ENCODE measurements at regions of chr9 and their contacts with region 1.

Region 1: GRCh38 chr9:37592108-37592951 is at the start of gene TOMM5:
- DNase-seq: peak; percentile 93
- ATAC-seq: peak; percentile 96
- H3K4me3 ChIP-seq: peak within 1 kb of the TSS; percentile 87 to 100 (median 97)
- H3K4me3 Mint-ChIP-seq: peak within 1 kb of the TSS; percentile 99
- H3K27ac ChIP-seq: peak within 1 kb of the TSS; percentile 71 to 83
- H3K27ac Mint-ChIP-seq: peak within 1 kb of the TSS; percentile 96
- H3K4me1 ChIP-seq: peaks cover 23 to 36% of the 10 kb centered on the region in 2 donors
- H3K4me1 Mint-ChIP-seq: peaks cover 46% of the 10 kb centered on the region
- H3K27me3 ChIP-seq: peaks cover 0 to 5% (median 0%) of the 10 kb centered on the region in 4 experiments
- H3K27me3 Mint-ChIP-seq: peaks cover 4% of the 10 kb centered on the region
- CTCF ChIP-seq: no peak
- total RNA-seq, gene TOMM5: 39.7 and 44.4 TPM in 2 replicates

Region 2: GRCh38 chr9:36572515-36573418 is 1019.6 kb before region 1 on chr9 and contains the start of gene MELK:
- CTCF ChIA-PET with region 1: no interaction called
- POLR2A ChIA-PET with region 1: no interaction called
- intact Hi-C with region 1: loop called (anchors 10 kb)
- DNase-seq: peak; percentile 86
- ATAC-seq: peak; percentile 90
- H3K4me3 ChIP-seq: peak within 1 kb of the TSS; percentile 67 to 97 (median 81)
- H3K4me3 Mint-ChIP-seq: peak within 1 kb of the TSS; percentile 90
- H3K27ac ChIP-seq: peak within 1 kb of the TSS; percentile 18 to 67
- H3K27ac Mint-ChIP-seq: peak within 1 kb of the TSS; percentile 71
- H3K4me1 ChIP-seq: peaks cover 8 to 16% of the 10 kb centered on the region in 2 donors
- H3K4me1 Mint-ChIP-seq: peaks cover 13% of the 10 kb centered on the region
- H3K27me3 ChIP-seq: peaks cover 0 to 2% (median 0%) of the 10 kb centered on the region in 4 experiments
- H3K27me3 Mint-ChIP-seq: peaks cover 4% of the 10 kb centered on the region
- CTCF ChIP-seq: no peak
- total RNA-seq, gene MELK: 0.17 TPM in 1 of 2 replicates, not detected in the other

Region 3: DNA sequence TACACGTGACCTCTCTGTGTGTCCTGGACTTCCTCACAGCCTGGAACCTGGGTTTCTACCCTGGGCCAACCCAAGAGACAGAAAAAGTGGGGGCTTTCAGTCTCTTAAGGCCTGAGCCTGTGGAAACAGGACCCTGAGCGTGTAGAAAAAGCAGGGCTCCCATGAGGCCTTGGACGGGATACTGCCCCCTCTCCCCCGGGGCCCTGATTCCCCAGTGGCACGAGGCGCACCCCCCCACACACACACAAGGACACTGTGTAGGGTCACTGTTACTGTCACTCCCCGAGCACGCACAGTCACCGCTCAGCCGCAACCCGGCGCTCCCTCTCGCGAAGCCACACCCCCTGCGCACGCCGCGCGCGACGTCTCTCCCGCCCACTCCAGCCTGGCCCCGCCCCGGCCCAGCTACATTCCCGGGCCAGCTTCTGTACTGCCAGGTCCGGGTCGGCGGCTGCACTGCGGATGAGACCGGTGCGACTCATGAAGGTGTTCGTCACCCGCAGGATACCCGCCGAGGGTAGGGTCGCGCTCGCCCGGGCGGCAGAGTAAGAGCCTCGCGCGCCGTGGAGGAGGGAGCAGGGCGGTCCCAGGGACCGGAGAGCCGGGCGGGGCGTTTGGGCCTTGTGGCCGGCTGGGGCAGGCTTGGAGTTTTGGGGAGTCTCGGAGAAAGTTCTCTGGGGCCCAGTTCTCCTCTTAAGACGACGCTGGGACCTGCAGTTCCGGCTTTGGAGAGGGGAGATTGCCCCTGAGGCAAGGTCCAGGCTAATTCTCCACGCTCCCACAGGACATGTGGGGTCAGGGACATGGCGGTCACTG is 169.8 kb before region 1 on chr9 and contains the start of gene GRHPR:
- CTCF ChIA-PET with region 1: interaction called, 4 read pairs
- POLR2A ChIA-PET with region 1: no interaction called
- intact Hi-C with region 1: loop called (anchors 5 kb)
- DNase-seq: peak; percentile 90
- ATAC-seq: peak; percentile 99
- H3K4me3 ChIP-seq: peak within 1 kb of the TSS; percentile 80 to 88 (median 82)
- H3K4me3 Mint-ChIP-seq: peak within 1 kb of the TSS; percentile 97
- H3K27ac ChIP-seq: peak within 1 kb of the TSS; percentile 68 to 80
- H3K27ac Mint-ChIP-seq: peak within 1 kb of the TSS; percentile 92
- H3K4me1 ChIP-seq: peaks cover 18 to 31% of the 10 kb centered on the region in 2 donors
- H3K4me1 Mint-ChIP-seq: peaks cover 28% of the 10 kb centered on the region
- H3K27me3 ChIP-seq: no peaks in the 10 kb centered on the region
- H3K27me3 Mint-ChIP-seq: no peaks in the 10 kb centered on the region
- CTCF ChIP-seq: no peak
- total RNA-seq, gene GRHPR: 121 and 122 TPM in 2 replicates

Region 4: DNA sequence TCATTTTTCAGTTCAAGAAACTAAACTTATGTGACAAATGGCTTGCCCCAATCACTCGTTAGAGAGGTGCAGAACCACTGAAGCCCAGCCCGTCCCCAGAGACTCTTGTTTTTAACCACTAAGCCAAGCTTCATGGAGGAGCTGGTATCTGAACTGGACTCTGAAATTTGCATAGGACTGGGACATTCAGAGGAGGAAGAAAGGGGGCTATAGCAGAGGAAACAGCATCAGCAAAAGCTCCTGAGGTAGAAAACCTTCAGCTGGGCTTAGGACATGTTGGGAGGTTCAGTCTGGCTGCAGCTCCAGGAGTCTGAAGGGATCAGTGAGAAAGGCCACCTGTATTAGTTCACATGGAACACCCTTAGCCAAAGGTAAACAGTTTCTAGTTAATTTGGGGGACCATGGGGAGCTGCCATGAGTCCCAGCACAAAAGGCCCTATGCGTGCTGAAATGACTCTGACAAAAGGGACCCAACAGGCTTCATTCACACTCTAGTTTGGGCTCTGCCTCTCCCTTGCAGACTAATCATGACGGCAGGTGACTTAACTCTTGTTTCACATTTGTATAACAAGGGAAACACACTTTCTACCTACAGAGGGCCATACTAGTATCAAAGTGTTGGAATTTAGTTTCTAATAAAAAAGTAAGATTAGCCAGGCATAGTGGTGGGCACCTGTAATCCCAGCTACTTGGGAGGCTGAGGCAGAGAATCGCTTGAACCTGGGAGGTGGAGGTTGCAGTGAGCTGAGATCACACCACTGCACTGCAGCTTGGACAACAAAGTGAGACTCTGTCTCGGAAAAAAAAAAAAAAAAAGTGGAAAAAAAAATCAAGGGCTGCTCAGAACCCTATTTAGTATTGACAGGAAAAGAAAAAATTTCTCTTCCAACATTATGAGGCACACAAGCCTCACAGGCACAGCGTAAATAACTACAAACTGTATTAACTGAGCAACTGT is 26.4 kb before region 1 on chr9:
- CTCF ChIA-PET with region 1: interaction called, 7 read pairs
- POLR2A ChIA-PET with region 1: interaction called, 8 read pairs
- intact Hi-C with region 1: loop called (anchors 1 kb)
- DNase-seq: peak; percentile 73
- ATAC-seq: peak; percentile 94
- H3K4me3 ChIP-seq: peak overlapping the region in 3 of 5 experiments; percentile 9 to 52 (median 33)
- H3K4me3 Mint-ChIP-seq: peak overlapping the region; percentile 83
- H3K27ac ChIP-seq: peak overlapping the region; percentile 70
- H3K27ac Mint-ChIP-seq: peak overlapping the region; percentile 94
- H3K4me1 ChIP-seq: peaks cover 59 to 76% of the 10 kb centered on the region in 2 donors
- H3K4me1 Mint-ChIP-seq: peaks cover 78% of the 10 kb centered on the region
- H3K27me3 ChIP-seq: no peaks in the 10 kb centered on the region
- H3K27me3 Mint-ChIP-seq: no peaks in the 10 kb centered on the region
- CTCF ChIP-seq: no peak

Region 5: GRCh38 chr9:37575921-37576721 is 16.2 kb before region 1 on chr9 and contains the start of gene FBXO10:
- CTCF ChIA-PET with region 1: interaction called, 101 read pairs
- POLR2A ChIA-PET with region 1: interaction called, 17 read pairs
- intact Hi-C with region 1: loop called (anchors 1 kb)
- DNase-seq: peak; percentile 75
- ATAC-seq: peak; percentile 73
- H3K4me3 ChIP-seq: peak within 1 kb of the TSS; percentile 64 to 95 (median 92)
- H3K4me3 Mint-ChIP-seq: peak within 1 kb of the TSS; percentile 98
- H3K27ac ChIP-seq: peak within 1 kb of the TSS; percentile 81 to 86
- H3K27ac Mint-ChIP-seq: peak within 1 kb of the TSS; percentile 96
- H3K4me1 ChIP-seq: peaks cover 17 to 27% of the 10 kb centered on the region in 2 donors
- H3K4me1 Mint-ChIP-seq: peaks cover 56% of the 10 kb centered on the region
- H3K27me3 ChIP-seq: no peaks in the 10 kb centered on the region
- H3K27me3 Mint-ChIP-seq: no peaks in the 10 kb centered on the region
- CTCF ChIP-seq: no peak
- total RNA-seq, gene FBXO10: 67.3 and 68.0 TPM in 2 replicates

Region 6: GRCh38 chr9:37640246-37640645 is 47.9 kb after region 1 on chr9:
- CTCF ChIA-PET with region 1: no interaction called
- POLR2A ChIA-PET with region 1: no interaction called
- intact Hi-C with region 1: no loop called
- DNase-seq: no peak
- ATAC-seq: no peak
- H3K4me3 ChIP-seq: no peak overlapping the region
- H3K4me3 Mint-ChIP-seq: no peak overlapping the region
- H3K27ac ChIP-seq: no peak overlapping the region
- H3K27ac Mint-ChIP-seq: no peak overlapping the region
- H3K4me1 ChIP-seq: no peaks in the 10 kb centered on the region
- H3K4me1 Mint-ChIP-seq: no peaks in the 10 kb centered on the region
- H3K27me3 ChIP-seq: peaks cover 0 to 10% (median 0%) of the 10 kb centered on the region in 4 experiments
- H3K27me3 Mint-ChIP-seq: peaks cover 15% of the 10 kb centered on the region
- CTCF ChIP-seq: no peak

Region 7: DNA sequence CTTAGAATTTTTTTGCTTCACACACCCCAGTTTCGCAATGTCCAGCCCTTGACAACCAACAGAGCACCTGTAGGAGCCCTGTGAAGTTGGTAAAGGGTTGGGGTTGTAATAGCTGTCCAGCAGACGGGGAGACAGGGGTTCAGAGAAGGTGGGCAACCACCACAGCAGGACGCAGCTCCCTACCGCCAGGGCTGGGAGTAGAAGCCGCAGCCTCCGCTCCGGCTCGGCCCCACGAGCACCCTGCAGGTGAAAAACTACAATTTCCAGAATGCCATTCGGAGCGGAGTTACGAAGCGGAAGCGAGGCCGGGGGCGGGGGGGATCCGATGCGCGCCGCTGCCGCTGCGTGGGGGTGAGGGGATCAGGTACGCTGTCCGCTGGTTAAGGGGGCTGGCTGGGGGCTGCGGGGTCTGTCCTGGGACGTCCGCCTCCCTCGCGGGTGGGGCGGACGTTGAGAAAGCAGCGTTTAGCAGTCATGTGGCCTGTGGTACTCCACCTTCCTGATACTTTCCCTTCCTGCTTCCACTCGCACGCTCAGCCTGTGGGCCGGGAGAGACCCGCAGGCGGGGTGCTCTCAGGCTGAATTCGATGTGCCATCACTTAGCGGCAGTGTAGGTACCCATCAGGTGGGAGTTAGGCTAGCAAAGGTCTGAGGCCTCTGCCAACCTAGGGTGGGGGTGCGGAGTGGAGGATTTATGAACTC is 161.3 kb after region 1 on chr9 and contains the start of gene TRMT10B:
- CTCF ChIA-PET with region 1: no interaction called
- POLR2A ChIA-PET with region 1: no interaction called
- intact Hi-C with region 1: loop called (anchors 1 kb)
- DNase-seq: peak; percentile 83
- ATAC-seq: peak; percentile 90
- H3K4me3 ChIP-seq: peak within 1 kb of the TSS; percentile 48 to 96 (median 84)
- H3K4me3 Mint-ChIP-seq: peak within 1 kb of the TSS; percentile 98
- H3K27ac ChIP-seq: peak within 1 kb of the TSS; percentile 80 to 81
- H3K27ac Mint-ChIP-seq: peak within 1 kb of the TSS; percentile 93
- H3K4me1 ChIP-seq: peaks cover 14 to 16% of the 10 kb centered on the region in 2 donors
- H3K4me1 Mint-ChIP-seq: peaks cover 23% of the 10 kb centered on the region
- H3K27me3 ChIP-seq: no peaks in the 10 kb centered on the region
- H3K27me3 Mint-ChIP-seq: no peaks in the 10 kb centered on the region
- CTCF ChIP-seq: no peak
- total RNA-seq, gene TRMT10B: 27.8 and 28.4 TPM in 2 replicates

Region 8: DNA sequence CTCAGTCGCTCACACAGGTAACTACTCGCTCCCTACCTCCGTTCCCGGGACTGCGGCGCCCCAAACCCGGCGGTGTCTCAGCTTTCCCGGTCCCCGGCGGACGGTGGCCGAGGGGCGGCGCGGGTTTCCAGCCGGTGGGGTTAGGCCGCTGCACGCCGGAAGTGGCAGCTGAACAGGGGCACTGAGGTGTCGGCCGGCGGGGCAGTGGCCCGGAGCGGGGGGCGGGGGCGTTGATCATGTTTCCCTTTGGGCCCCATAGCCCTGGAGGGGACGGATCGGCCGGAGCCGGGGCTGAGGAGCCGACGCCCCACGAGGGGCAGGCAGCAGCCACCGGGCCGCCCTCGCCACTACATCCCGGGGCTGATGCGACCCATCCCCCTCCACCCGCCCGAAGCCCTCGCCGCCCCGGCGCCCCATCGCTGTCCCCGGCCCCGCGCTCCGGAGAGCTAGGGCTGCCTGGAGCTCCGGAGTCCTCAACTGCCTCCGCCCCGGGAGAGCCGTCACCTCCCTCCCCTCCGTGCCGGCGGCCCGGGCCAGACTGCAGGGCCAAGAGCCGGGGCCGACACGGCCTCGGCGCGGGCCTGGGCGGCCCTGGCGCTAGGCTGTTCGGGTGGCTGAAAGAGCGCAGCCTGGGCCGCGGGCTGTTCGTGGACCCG is 208.4 kb after region 1 on chr9 and contains the start of gene DCAF10:
- CTCF ChIA-PET with region 1: no interaction called
- POLR2A ChIA-PET with region 1: interaction called, 5 read pairs
- intact Hi-C with region 1: loop called (anchors 1 kb)
- DNase-seq: peak; percentile 94
- ATAC-seq: peak; percentile 85
- H3K4me3 ChIP-seq: peak within 1 kb of the TSS; percentile 82 to 89 (median 85)
- H3K4me3 Mint-ChIP-seq: peak within 1 kb of the TSS; percentile 95
- H3K27ac ChIP-seq: peak within 1 kb of the TSS; percentile 67 to 89
- H3K27ac Mint-ChIP-seq: peak within 1 kb of the TSS; percentile 94
- H3K4me1 ChIP-seq: peaks cover 19 to 30% of the 10 kb centered on the region in 2 donors
- H3K4me1 Mint-ChIP-seq: peaks cover 37% of the 10 kb centered on the region
- H3K27me3 ChIP-seq: no peaks in the 10 kb centered on the region
- H3K27me3 Mint-ChIP-seq: no peaks in the 10 kb centered on the region
- CTCF ChIP-seq: no peak
- total RNA-seq, gene DCAF10: 22.1 and 22.5 TPM in 2 replicates

Measured in B cell (primary cell).